ENCODE measurements at regions of chr3 and their contacts with region 1.

Region 1: GRCh38 chr3:186783073-186783730 is at the start of gene EIF4A2:
- DNase-seq: peak; percentile 88
- H3K4me3 Mint-ChIP-seq: peak within 1 kb of the TSS; percentile 96
- H3K27ac Mint-ChIP-seq: peak within 1 kb of the TSS; percentile 99
- H3K4me1 Mint-ChIP-seq: peaks cover 31% of the 10 kb centered on the region
- H3K27me3 Mint-ChIP-seq: no peaks in the 10 kb centered on the region
- total RNA-seq, gene EIF4A2: 445 and 450 TPM in 2 replicates

Region 2: DNA sequence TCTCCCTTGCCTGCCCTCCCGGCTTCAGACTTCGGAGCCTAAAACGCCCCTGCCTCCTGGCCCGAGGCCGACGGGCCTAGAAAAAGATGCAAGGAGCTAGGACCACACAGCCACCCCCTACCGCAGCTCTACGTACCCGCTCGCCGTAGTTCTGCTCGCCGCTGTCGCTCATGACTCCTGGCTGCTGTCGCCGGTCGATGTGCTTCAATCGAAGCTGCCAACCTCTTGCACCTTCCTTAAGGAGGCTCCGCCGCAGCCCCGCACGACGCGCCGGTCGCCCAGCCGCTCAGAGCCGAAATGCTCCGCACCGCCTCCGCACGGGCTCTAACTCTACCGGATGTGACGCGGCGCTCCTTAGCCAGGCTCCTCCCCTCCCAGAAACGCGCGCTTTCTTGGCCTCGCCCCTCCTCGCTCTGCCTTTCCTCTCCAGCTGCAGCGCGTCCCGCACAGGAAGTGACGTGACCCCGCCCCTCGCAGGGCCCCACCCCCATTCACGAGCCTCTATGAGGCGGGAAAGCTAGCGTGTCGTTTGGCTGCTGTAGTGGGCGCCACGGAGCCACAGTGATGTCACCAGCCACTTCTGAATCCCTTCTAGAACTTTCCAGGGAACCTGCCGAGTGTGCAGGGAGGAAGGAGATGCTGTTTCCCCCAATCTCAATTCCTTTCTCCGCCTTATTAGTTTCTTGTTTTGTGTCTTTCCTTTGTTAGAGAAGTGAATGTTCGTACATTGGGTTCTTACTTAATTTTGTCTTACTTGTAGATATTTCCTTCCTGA is 845.3 kb before region 1 on chr3 and contains the start of gene TRA2B:
- intact Hi-C with region 1: loop called (anchors 1 kb)
- DNase-seq: peak; percentile 98
- H3K4me3 Mint-ChIP-seq: peak within 1 kb of the TSS; percentile 98
- H3K27ac Mint-ChIP-seq: peak within 1 kb of the TSS; percentile 100
- H3K4me1 Mint-ChIP-seq: peaks cover 34% of the 10 kb centered on the region
- H3K27me3 Mint-ChIP-seq: peaks cover 13% of the 10 kb centered on the region
- total RNA-seq, gene TRA2B: 277 and 282 TPM in 2 replicates

Region 3: GRCh38 chr3:186570096-186570940 is 212.9 kb before region 1 on chr3 and contains the start of gene DNAJB11:
- intact Hi-C with region 1: loop called (anchors 2 kb)
- DNase-seq: peak; percentile 98
- H3K4me3 Mint-ChIP-seq: peak within 1 kb of the TSS; percentile 89
- H3K27ac Mint-ChIP-seq: peak within 1 kb of the TSS; percentile 98
- H3K4me1 Mint-ChIP-seq: peaks cover 42% of the 10 kb centered on the region
- H3K27me3 Mint-ChIP-seq: no peaks in the 10 kb centered on the region
- total RNA-seq, gene DNAJB11: 66.3 and 72.8 TPM in 2 replicates

Region 4: GRCh38 chr3:186617038-186617946 is 165.9 kb before region 1 on chr3:
- intact Hi-C with region 1: loop called (anchors 5 kb)
- DNase-seq: peak; percentile 77
- H3K4me3 Mint-ChIP-seq: peak overlapping the region; percentile 61
- H3K27ac Mint-ChIP-seq: peak overlapping the region; percentile 50
- H3K4me1 Mint-ChIP-seq: peaks cover 13% of the 10 kb centered on the region
- H3K27me3 Mint-ChIP-seq: peaks cover 43% of the 10 kb centered on the region

Region 5: DNA sequence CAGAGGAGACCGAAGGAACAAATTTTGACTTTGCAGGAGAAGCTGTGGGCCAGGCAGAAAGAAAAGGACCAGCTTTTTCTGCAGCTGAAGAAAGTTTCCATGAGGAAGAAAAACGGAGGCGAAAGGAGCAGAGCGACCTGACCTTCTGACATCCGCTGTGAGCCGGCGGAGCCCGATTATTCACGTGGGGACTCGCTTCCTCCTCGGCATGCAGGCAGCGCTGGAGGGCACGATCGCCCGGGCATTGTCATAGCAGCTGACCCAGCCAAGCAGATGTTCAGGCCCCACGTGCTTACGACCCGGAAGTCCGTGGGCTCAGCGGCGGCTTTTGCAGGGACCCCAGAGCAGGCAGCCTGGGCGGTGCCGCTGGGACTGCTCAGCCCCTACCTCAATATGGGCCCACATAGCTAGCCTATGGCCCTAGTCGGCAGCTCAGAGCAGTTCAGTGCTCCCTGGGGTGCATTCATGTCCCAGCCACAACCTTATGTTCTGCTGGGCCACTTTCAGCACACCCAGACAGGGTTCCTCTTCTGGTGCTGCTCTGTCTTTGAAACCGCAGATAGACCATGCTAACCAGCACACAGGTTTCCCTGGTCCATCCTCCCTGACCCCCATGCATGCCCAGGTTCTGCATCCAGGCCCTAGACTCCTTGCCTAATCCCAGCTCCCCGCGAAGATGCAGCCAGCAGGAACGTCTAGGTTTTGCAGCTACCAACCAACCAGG is 10.3 kb before region 1 on chr3:
- intact Hi-C with region 1: loop called (anchors 1 kb)
- DNase-seq: peak; percentile 55
- H3K4me3 Mint-ChIP-seq: peak overlapping the region; percentile 82
- H3K27ac Mint-ChIP-seq: peak overlapping the region; percentile 84
- H3K4me1 Mint-ChIP-seq: peaks cover 11% of the 10 kb centered on the region
- H3K27me3 Mint-ChIP-seq: no peaks in the 10 kb centered on the region

Region 6: DNA sequence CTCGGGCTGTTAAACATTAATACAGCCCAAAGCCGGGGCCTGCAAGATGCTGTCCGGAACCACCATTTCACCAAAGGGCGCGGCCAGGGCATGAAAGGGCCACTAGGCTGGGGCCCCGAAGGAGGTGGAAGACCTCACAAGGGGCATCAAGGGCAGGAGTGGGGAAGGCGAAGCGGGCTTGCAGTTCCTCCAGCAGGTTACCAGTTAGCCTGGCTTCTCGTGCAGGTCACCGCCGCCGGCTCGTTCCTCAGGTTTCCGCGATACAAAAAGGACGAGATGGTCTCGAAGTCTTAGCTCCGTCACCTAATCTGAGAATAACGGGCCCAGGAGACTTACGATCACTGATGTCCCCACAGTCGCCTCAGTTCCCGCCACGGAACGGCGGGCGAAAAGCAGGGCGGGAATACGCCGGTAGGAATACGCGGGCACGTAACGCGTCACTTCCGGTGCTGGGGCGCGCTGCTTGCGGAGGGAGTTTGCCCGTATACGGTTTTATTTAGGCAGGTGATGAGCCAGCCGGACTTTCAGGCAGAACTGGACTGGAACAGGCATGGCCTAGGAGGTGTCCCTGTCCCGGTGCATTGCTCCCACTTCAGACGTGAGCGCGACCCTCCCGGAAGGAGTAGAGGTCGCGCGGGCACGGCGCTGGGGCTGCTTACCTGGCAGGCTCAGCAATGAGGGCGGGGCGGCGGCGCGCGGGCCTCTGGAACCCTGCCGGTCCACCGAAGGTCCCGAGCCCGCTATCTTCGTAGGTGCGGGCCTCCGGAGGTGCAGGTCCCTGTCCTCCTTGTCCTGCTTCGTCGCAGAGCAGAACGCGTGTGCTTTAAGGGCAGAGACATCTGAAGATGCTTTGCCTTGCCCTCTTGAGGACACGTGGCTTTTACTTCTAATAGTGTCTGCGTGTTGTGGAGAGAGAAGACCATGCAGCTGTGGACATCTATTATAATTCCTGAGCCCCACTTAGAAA is 23.2 kb after region 1 on chr3 and contains the start of gene RFC4:
- intact Hi-C with region 1: loop called (anchors 1 kb)
- DNase-seq: peak; percentile 79
- H3K4me3 Mint-ChIP-seq: peak within 1 kb of the TSS; percentile 90
- H3K27ac Mint-ChIP-seq: peak within 1 kb of the TSS; percentile 85
- H3K4me1 Mint-ChIP-seq: peaks cover 23% of the 10 kb centered on the region
- H3K27me3 Mint-ChIP-seq: no peaks in the 10 kb centered on the region
- total RNA-seq, gene RFC4: 97.2 and 105 TPM in 2 replicates

Region 7: GRCh38 chr3:186821429-186822367 is 38.5 kb after region 1 on chr3:
- intact Hi-C with region 1: loop called (anchors 5 kb)
- DNase-seq: no peak
- H3K4me3 Mint-ChIP-seq: no peak overlapping the region
- H3K27ac Mint-ChIP-seq: no peak overlapping the region
- H3K4me1 Mint-ChIP-seq: peaks cover 19% of the 10 kb centered on the region
- H3K27me3 Mint-ChIP-seq: no peaks in the 10 kb centered on the region

Measured in activated T-helper 2 cell treated with anti-CD3 and anti-CD28 coated beads, Interferon-gamma antibody, Interleukin-2, Interleukin-4, amounts not matched to agents 10 μg/mL and 5 μg/mL and 100 μg/mL, durations not matched to agents 14 hours and 24 hours and 36 hours (primary cell).